ENCODE measurements at regions of chr22 and their contacts with region 1.

Region 1: GRCh38 chr22:24391836-24392217 is 35.6 kb upstream of the ADORA2A start:
- DNase-seq: peak; percentile 60
- H3K4me3 ChIP-seq: no peak overlapping the region
- H3K27ac ChIP-seq: peak overlapping the region; percentile 14
- H3K4me1 ChIP-seq: peaks cover 39% of the 10 kb centered on the region
- H3K27me3 ChIP-seq: no peaks in the 10 kb centered on the region
- CTCF ChIP-seq: no peak
- POLR2A ChIP-seq: no peak

Region 2: GRCh38 chr22:24333301-24333700 is 58.5 kb before region 1 on chr22:
- CTCF ChIA-PET with region 1: no interaction called
- POLR2A ChIA-PET with region 1: no interaction called
- dilution Hi-C with region 1: no loop called
- intact Hi-C with region 1: no loop called
- DNase-seq: no peak
- H3K4me3 ChIP-seq: no peak overlapping the region
- H3K27ac ChIP-seq: no peak overlapping the region
- H3K4me1 ChIP-seq: peaks cover 14% of the 10 kb centered on the region
- H3K27me3 ChIP-seq: no peaks in the 10 kb centered on the region
- CTCF ChIP-seq: no peak
- POLR2A ChIP-seq: no peak

Region 3: GRCh38 chr22:24379536-24379935 is 12.3 kb before region 1 on chr22:
- CTCF ChIA-PET with region 1: interaction called, 12 read pairs
- POLR2A ChIA-PET with region 1: no interaction called
- dilution Hi-C with region 1: no loop called
- intact Hi-C with region 1: no loop called
- DNase-seq: peak; percentile 74
- H3K4me3 ChIP-seq: no peak overlapping the region
- H3K27ac ChIP-seq: peak overlapping the region; percentile 24
- H3K4me1 ChIP-seq: peaks cover 19% of the 10 kb centered on the region
- H3K27me3 ChIP-seq: no peaks in the 10 kb centered on the region
- CTCF ChIP-seq: no peak
- POLR2A ChIP-seq: no peak

Region 4: DNA sequence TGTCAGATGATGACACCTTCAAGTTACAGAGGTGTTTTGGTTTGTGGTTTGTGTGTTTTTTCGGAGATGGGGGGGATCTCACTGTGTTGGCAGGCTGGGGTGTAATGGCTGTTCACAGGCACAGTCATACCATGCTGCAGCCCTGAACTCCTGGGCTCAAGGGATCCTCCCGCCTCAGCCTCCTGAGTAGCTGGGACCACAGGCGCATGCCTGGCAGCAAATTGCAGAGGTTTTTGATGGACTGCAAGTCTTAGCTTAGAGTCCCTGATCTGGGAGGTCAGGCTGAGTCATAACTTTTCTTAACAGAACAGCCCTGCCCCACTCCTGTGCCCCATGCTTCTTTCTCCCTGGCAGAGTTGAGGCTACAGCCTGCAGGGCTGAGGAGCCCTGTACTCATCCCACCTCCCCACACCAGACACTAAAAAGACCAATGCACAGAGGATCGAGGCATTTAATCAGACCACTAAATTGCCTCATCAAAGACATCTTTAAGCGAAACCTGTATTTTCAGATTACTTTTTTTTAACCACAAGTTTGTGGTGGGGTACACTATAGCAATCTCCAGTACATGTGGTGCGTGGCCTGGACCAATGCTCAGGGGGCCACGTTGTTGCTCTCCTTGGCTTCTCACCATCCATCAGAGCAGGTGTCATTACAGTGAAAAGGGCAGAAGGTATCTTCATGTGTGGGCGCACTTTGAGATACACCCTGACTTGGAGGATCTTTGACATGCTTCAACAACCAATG is 18.5 kb after region 1 on chr22:
- CTCF ChIA-PET with region 1: interaction called, 11 read pairs
- POLR2A ChIA-PET with region 1: no interaction called
- dilution Hi-C with region 1: no loop called
- intact Hi-C with region 1: no loop called
- DNase-seq: no peak
- H3K4me3 ChIP-seq: no peak overlapping the region
- H3K27ac ChIP-seq: no peak overlapping the region
- H3K4me1 ChIP-seq: peaks cover 38% of the 10 kb centered on the region
- H3K27me3 ChIP-seq: no peaks in the 10 kb centered on the region
- CTCF ChIP-seq: no peak
- POLR2A ChIP-seq: no peak

Region 5: DNA sequence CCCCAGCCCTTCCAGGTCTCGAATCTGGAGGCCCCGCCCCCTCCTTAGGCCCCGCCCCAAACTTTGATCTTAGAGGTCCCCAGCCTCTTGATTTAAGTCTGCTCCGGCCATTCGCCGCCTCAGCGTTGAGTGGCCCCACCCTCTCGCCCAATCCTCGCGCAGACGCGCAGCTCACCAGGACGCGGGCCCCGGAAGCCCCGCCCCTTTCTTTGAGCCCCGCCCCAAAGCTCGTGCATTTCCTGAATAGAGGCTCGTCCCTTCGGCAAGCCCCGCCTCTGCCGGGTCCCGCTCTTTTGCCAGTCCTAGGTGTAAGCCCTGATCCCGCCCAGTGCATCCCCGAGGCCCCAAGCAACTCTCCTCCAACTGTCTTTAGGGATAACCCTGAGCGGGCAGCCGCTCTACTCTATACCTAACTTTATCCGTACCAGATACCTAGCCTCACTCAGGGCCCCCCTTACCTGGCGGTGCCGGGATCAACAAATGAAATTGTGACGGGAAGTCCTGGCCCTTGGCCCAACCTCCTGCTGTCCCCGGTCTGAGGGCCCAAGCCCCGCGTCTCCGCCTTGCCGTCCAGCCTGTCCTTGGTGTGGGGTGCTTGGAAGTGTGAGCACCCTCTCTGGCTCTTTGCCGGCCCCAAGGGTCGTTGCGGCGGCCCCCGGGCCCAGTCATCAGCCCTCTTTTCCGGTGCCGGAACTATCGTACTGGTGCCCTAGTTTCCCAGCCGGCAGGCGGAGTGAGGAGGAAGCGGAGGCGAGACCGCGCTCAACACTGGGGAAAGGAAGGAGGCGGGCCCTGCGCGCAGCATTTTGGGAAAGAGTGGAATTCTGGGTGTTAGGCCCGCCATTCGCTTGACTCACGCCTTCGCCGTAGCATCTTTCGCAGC is 163.6 kb after region 1 on chr22 and contains the start of gene SNRPD3:
- CTCF ChIA-PET with region 1: no interaction called
- POLR2A ChIA-PET with region 1: no interaction called
- dilution Hi-C with region 1: no loop called
- intact Hi-C with region 1: no loop called
- DNase-seq: peak; percentile 99
- H3K4me3 ChIP-seq: peak within 1 kb of the TSS; percentile 71 to 90 (median 87)
- H3K27ac ChIP-seq: peak within 1 kb of the TSS; percentile 96
- H3K4me1 ChIP-seq: peaks cover 24% of the 10 kb centered on the region
- H3K27me3 ChIP-seq: no peaks in the 10 kb centered on the region
- CTCF ChIP-seq: peak in 1 of 2 donors; percentile 25
- POLR2A ChIP-seq: no peak
- total RNA-seq, gene SNRPD3: 113 and 121 TPM in 2 replicates